CD4-positive, alpha-beta memory T cell (primary cell): ENCODE measurements at regions of chr15 and their contacts with region 1.

Region 1: GRCh38 chr15:40274350-40275274 is 8.3 kb downstream of the ANKRD63 start:
- DNase-seq: peak; percentile 81 to 88 (median 84)
- H3K4me3 ChIP-seq: no peak overlapping the region
- H3K4me3 Mint-ChIP-seq: no peak overlapping the region
- H3K27ac ChIP-seq: no peak overlapping the region
- H3K27ac Mint-ChIP-seq: peak overlapping the region in 3 of 7 donors; percentile 24 to 54 (median 32)
- H3K4me1 ChIP-seq: peaks cover 5% of the 10 kb centered on the region
- H3K4me1 Mint-ChIP-seq: peaks cover 2 to 11% (median 5%) of the 10 kb centered on the region in 4 donors
- H3K27me3 ChIP-seq: no peaks in the 10 kb centered on the region
- H3K27me3 Mint-ChIP-seq: peaks cover 3 to 18% of the 10 kb centered on the region in 2 donors

Region 2: DNA sequence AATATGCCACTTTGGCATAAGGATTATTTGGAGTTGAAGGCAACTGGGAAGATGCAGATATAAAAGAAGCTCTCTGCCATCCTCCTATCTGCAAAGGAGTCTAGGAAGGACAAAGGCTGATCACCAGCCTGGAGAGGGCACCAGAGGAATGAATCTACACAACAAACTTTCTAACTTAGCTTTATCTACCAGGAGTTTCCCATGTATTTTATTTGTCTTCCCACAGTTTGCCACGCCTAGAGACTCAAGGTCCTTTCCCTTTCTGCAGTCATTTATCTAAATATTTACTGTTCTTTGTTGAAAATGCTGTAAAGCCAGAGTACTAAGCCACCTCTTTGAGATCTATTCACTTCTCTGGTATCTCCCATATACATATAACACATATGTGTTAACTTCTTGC is 386.8 kb before region 1 on chr15:
- CTCF ChIA-PET with region 1: interaction called, 4 read pairs
- POLR2A ChIA-PET with region 1: no interaction called
- intact Hi-C with region 1: loop called (anchors 10 kb)
- DNase-seq: no peak
- H3K4me3 ChIP-seq: no peak overlapping the region
- H3K4me3 Mint-ChIP-seq: no peak overlapping the region
- H3K27ac ChIP-seq: no peak overlapping the region
- H3K27ac Mint-ChIP-seq: no peak overlapping the region
- H3K4me1 ChIP-seq: no peaks in the 10 kb centered on the region
- H3K4me1 Mint-ChIP-seq: no peaks in the 10 kb centered on the region
- H3K27me3 ChIP-seq: peaks cover 11% of the 10 kb centered on the region
- H3K27me3 Mint-ChIP-seq: peaks cover 5 to 8% of the 10 kb centered on the region in 2 donors

Region 3: DNA sequence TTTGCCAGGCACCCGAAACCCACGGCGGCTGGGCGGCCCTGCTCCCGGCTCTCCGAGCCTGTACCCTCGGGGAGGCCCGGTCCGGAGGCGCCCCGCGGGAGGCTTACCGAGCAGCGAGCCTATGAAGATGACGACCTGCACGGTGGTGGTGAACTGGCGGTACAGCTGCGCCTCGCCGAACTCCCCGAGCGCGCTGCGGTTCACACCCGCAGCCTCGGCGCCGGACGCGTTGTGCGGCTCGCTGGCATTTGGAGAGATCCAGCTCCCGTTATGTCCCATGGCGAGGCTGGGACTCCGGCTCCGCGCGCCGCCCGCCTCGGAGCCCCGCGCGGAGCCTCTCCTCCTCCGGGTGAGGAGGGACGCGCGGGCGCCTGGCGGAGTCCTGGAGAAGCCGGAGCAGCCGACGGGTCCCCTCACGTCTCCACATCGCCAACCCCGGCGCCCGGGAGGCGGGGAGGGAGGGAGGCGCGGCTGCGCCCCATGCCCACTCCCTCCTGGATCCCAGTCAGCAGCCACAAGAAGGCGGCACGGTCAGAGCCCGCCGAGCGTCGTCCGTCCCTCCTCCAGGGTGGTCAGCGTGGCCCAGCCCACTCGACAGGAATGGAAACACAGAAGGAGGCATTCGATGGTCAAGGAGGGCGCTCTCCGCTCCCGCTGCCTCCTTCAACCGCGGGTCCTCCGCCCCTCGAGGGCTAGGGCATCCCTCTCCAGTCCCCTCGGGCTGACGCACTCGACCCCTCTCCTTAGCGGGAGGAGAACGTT is 354.7 kb before region 1 on chr15 and contains the start of gene GPR176:
- CTCF ChIA-PET with region 1: no interaction called
- POLR2A ChIA-PET with region 1: no interaction called
- intact Hi-C with region 1: no loop called
- DNase-seq: peak; percentile 17 to 41 (median 34)
- H3K4me3 ChIP-seq: peak within 1 kb of the TSS; percentile 31 to 57
- H3K4me3 Mint-ChIP-seq: peak within 1 kb of the TSS; percentile 84 to 92 (median 88)
- H3K27ac ChIP-seq: no peak within 1 kb of the TSS
- H3K27ac Mint-ChIP-seq: peak within 1 kb of the TSS in 4 of 7 donors; percentile 38 to 85 (median 69)
- H3K4me1 ChIP-seq: peaks cover 19% of the 10 kb centered on the region
- H3K4me1 Mint-ChIP-seq: peaks cover 5 to 22% (median 10%) of the 10 kb centered on the region in 4 donors
- H3K27me3 ChIP-seq: peaks cover 20% of the 10 kb centered on the region
- H3K27me3 Mint-ChIP-seq: peaks cover 17 to 21% of the 10 kb centered on the region in 2 donors
- total RNA-seq, gene GPR176: not detected

Region 4: GRCh38 chr15:40108855-40109735 is 165.5 kb before region 1 on chr15 and contains the start of gene BMF:
- CTCF ChIA-PET with region 1: interaction called, 26 read pairs
- POLR2A ChIA-PET with region 1: no interaction called
- intact Hi-C with region 1: loop called (anchors 2 kb)
- DNase-seq: peak; percentile 92 to 98 (median 93)
- H3K4me3 ChIP-seq: peak within 1 kb of the TSS; percentile 44 to 76
- H3K4me3 Mint-ChIP-seq: peak within 1 kb of the TSS; percentile 93 to 98 (median 96)
- H3K27ac ChIP-seq: peak within 1 kb of the TSS; percentile 56
- H3K27ac Mint-ChIP-seq: peak within 1 kb of the TSS; percentile 88 to 95 (median 92)
- H3K4me1 ChIP-seq: peaks cover 46% of the 10 kb centered on the region
- H3K4me1 Mint-ChIP-seq: peaks cover 17 to 49% (median 30%) of the 10 kb centered on the region in 4 donors
- H3K27me3 ChIP-seq: no peaks in the 10 kb centered on the region
- H3K27me3 Mint-ChIP-seq: peaks cover 2 to 4% of the 10 kb centered on the region in 2 donors
- total RNA-seq, gene BMF: 13.3 to 13.7 TPM

Region 5: DNA sequence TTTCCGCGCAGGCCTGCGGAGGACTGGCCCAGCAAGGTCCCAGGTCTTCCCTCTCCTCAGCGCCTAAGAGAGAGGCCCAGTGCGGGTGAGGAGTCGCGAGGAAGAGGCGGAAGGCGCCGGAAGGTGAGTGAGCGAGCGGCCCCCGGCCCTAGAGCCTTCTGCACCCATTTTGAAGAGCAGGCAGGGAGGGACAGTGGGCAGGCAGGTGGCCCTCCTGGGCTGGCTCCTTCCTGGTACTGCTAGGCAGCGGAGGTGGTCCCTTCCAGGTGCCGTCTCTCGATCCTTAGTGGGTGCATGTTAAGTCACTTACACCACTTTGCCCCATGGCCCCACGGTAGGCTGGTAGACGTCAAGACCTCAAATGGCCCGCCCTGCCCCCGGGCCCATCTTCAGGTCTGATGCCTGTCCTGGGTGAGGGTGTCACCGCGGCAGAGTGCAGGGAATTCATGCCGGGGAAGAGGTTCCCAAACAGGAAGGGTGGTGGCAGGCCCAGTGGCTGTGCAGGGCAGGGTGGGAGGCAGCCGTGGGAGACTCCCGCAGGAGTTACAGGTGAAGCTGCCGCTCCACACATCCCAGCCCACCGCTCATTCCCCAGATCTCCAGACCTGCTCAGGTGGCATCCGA is 21.3 kb before region 1 on chr15:
- CTCF ChIA-PET with region 1: interaction called, 14 read pairs
- POLR2A ChIA-PET with region 1: no interaction called
- intact Hi-C with region 1: no loop called
- DNase-seq: no peak
- H3K4me3 ChIP-seq: peak overlapping the region; percentile 23 to 51
- H3K4me3 Mint-ChIP-seq: peak overlapping the region; percentile 50 to 84 (median 76)
- H3K27ac ChIP-seq: no peak overlapping the region
- H3K27ac Mint-ChIP-seq: peak overlapping the region in 2 of 7 donors; percentile 21 to 70
- H3K4me1 ChIP-seq: peaks cover 5% of the 10 kb centered on the region
- H3K4me1 Mint-ChIP-seq: peaks cover 2 to 18% (median 12%) of the 10 kb centered on the region in 4 donors
- H3K27me3 ChIP-seq: peaks cover 7% of the 10 kb centered on the region
- H3K27me3 Mint-ChIP-seq: peaks cover 16% of the 10 kb centered on the region in 2 donors

Region 6: GRCh38 chr15:40307421-40308211 is 33.0 kb after region 1 on chr15 and contains the start of gene PLCB2:
- CTCF ChIA-PET with region 1: interaction called, 427 read pairs
- POLR2A ChIA-PET with region 1: interaction called, 40 read pairs
- intact Hi-C with region 1: loop called (anchors 1 kb)
- DNase-seq: peak; percentile 73 to 80 (median 76)
- H3K4me3 ChIP-seq: peak within 1 kb of the TSS; percentile 84 to 98
- H3K4me3 Mint-ChIP-seq: peak within 1 kb of the TSS; percentile 94 to 98 (median 96)
- H3K27ac ChIP-seq: peak within 1 kb of the TSS; percentile 79
- H3K27ac Mint-ChIP-seq: peak within 1 kb of the TSS; percentile 93 to 98 (median 96)
- H3K4me1 ChIP-seq: peaks cover 44% of the 10 kb centered on the region
- H3K4me1 Mint-ChIP-seq: peaks cover 28 to 68% (median 39%) of the 10 kb centered on the region in 4 donors
- H3K27me3 ChIP-seq: no peaks in the 10 kb centered on the region
- H3K27me3 Mint-ChIP-seq: no peaks in the 10 kb centered on the region
- total RNA-seq, gene PLCB2: 211 to 219 TPM

Region 7: GRCh38 chr15:40421246-40422157 is 146.9 kb after region 1 on chr15:
- CTCF ChIA-PET with region 1: interaction called, 21 read pairs
- POLR2A ChIA-PET with region 1: no interaction called
- intact Hi-C with region 1: no loop called
- DNase-seq: peak; percentile 73 to 77 (median 74)
- H3K4me3 ChIP-seq: no peak overlapping the region
- H3K4me3 Mint-ChIP-seq: no peak overlapping the region
- H3K27ac ChIP-seq: no peak overlapping the region
- H3K27ac Mint-ChIP-seq: peak overlapping the region in 1 of 7 donors; percentile 40
- H3K4me1 ChIP-seq: peaks cover 8% of the 10 kb centered on the region
- H3K4me1 Mint-ChIP-seq: peaks cover 0 to 5% (median 0%) of the 10 kb centered on the region in 4 donors
- H3K27me3 ChIP-seq: no peaks in the 10 kb centered on the region
- H3K27me3 Mint-ChIP-seq: no peaks in the 10 kb centered on the region